ENCODE measurements at regions of chr16 and their contacts with region 1.

Region 1: DNA sequence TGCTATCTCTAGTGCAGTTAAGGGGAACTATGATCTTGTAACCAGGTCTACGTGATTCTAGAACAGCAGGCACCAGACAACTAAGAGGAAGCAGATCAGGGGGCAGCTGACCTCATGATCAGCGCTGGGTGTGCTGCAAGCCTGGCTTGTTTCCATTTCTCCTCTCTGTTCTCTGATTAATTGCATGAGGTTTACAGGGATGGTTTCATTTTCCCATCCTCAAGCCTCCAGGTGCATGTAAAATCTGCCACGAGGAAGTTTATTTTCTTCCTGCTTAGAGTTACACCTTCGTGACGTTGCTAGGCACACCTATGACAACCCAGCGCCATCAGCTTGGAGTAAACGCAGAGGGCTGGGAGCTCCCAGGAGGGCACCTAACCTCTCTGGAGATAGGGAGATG is 4.3 kb upstream of the NUPR1 start:
- DNase-seq: peak; percentile 68

Region 2: GRCh38 chr16:28491970-28492474 is 51.0 kb before region 1 on chr16 and contains the start of gene CLN3:
- in situ Hi-C with region 1: loop called (anchors 5 kb)
- DNase-seq: peak; percentile 98